ENCODE measurements at regions of chr9 and their contacts with region 1.

Region 1: DNA sequence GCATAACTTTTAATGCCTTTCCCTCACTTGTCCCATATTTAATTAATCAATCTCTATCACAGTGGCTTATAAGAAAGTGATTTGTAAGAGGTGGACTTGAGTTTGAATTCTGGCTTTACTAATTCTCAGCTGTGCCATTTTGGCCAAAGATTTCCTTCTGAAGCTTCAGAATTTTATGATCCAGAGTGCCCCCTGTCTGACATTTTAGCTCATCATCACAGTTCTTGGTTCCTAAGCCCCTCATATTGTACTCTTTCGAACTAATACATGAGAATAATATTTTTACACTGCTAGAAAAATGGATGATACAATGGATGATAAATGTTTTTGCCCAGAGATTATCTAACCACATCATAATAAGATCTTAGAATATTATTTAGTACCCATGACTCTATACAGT is 1014.1 kb downstream of the PTPRD start:
- DNase-seq: no peak
- H3K4me3 ChIP-seq: no peak overlapping the region
- H3K27ac ChIP-seq: no peak overlapping the region
- H3K4me1 ChIP-seq: no peaks in the 10 kb centered on the region
- H3K27me3 ChIP-seq: no peaks in the 10 kb centered on the region

Region 2: GRCh38 chr9:9177081-9177480 is 421.6 kb before region 1 on chr9:
- in situ Hi-C with region 1: no loop called
- DNase-seq: no peak
- H3K4me3 ChIP-seq: no peak overlapping the region
- H3K27ac ChIP-seq: no peak overlapping the region
- H3K4me1 ChIP-seq: no peaks in the 10 kb centered on the region
- H3K27me3 ChIP-seq: no peaks in the 10 kb centered on the region

Region 3: DNA sequence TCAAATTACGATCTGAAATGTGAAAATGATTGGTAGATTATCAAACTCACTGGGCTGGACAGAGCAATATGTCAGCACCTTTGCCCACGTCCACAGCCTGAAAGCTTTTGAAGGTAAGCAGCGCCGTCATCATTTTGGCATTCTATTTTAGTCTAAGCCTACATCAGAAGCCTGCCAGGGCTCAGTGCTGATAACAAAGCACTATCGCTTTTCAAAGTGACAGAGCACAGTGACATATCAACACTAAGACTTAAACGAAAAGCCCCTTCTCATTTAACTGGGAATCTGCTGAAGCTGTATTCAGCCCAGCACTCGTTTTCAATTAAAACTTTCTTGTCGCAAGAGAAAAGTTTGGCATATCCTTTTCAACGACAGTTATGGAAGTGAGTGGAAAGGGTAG is 62.2 kb before region 1 on chr9:
- in situ Hi-C with region 1: loop called (anchors 10 kb)
- DNase-seq: no peak
- H3K4me3 ChIP-seq: no peak overlapping the region
- H3K27ac ChIP-seq: no peak overlapping the region
- H3K4me1 ChIP-seq: no peaks in the 10 kb centered on the region
- H3K27me3 ChIP-seq: no peaks in the 10 kb centered on the region